MCF 10A (cell line): ENCODE measurements at regions of chr7 and their contacts with region 1.

Region 1: DNA sequence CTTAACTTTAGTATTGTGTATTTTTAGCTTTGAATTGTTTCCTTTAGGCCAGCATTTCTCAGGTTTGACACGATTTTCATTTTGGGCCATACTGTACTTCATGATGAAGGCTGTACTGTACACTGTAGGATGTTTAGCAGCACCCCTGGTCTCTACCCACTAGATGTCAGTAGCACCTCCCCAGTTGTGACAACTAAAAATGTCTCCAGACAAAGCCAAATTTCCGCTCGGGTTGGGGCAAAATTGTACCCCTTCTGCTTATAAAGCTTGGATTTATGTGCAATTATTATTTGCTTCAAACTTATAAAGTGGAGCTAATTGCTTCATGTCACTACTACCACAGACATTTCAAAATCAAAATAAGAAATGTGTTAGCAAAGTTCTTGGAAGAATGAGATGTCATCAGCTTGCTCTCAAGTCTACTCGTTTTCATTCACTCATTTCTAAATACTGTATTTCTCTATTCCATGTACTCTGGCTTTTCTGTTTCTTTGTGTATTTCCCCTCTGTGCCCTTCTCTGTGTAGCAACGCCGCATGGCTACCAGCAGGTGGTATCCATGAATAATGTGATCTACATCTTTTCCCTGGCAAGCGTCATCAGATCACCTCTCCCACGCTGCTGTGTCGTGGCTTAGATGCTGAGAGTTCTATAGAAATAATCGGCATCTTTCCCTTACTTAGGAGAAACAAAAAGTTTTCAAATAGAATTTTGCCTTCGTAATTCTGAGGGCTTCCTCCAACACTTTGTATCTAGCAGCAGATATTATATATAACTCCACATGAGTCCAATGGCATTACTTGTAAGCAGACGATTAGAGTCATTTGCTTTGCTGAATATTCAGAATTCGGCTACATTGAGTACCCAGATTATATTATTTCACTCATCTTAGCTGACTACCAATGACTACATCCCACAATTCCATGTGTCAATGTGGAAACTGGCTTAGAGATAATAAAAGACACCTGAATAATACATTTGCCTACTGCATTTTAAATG is 47.8 kb upstream of the CALCR start:
- DNase-seq: peak; percentile 41
- H3K4me3 Mint-ChIP-seq: no peak overlapping the region
- H3K27ac Mint-ChIP-seq: no peak overlapping the region
- H3K4me1 Mint-ChIP-seq: peaks cover 6% of the 10 kb centered on the region
- H3K27me3 Mint-ChIP-seq: peaks cover 91% of the 10 kb centered on the region
- CTCF ChIP-seq: peak; percentile 41

Region 2: DNA sequence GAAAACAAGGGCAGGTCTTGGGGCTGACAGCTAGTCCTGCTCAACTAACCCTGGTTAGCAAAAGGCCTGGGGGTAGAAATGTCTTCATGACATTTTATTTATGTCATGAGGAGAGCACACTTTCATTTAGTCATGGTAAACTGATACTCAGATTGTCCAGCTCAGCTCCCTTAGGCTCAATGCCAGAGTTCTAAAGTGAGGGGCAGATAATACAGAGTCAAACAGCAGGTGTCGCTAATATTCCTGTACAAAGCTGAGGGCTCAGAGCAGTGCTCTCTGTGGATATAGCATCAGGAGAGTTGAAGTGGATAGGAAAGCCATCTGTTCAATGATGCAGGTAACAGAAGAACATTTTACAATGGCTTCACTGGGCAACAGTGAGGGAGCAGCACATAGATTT is 21.0 kb before region 1 on chr7:
- CTCF ChIA-PET with region 1: interaction called, 13 read pairs
- POLR2A ChIA-PET with region 1: no interaction called
- intact Hi-C with region 1: no loop called
- DNase-seq: peak; percentile 20
- H3K4me3 Mint-ChIP-seq: no peak overlapping the region
- H3K27ac Mint-ChIP-seq: no peak overlapping the region
- H3K4me1 Mint-ChIP-seq: no peaks in the 10 kb centered on the region
- H3K27me3 Mint-ChIP-seq: peaks cover 87% of the 10 kb centered on the region
- CTCF ChIP-seq: no peak

Region 3: DNA sequence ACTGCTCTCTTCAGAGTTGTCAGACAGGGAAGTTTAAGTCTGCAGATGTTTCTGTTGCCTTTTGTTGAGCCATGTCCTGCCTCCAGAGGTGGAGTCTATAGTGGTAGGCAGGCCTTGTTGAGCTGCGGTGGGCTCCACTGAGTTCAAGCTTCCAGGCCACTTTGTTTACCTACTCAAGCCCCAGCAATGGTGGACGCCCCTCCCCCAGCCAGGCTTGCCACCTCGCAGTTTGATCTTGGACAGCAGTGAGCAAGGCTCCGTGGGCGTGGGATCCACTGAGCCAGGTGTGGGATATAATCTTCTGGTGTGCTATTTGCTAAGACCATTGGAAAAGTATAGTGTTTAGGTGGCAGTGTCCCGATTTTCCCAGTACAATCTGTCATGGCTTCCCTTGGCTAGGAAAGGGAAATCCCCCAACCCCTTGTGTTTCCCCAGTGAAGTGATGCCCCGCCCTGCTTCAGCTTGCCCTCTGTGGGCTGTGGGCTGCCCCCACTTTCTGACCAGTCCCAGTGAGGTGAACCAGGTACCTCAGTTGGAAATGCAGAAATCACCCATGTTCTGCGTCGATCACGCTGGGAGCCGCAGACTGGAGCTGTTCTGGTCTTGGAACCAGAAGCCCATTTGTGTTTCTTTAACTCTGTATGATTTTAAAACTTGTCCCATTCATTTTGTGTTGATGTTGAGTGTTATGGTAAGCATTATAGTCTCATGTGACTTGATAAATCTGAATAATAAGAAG is 41.4 kb after region 1 on chr7:
- CTCF ChIA-PET with region 1: no interaction called
- POLR2A ChIA-PET with region 1: no interaction called
- intact Hi-C with region 1: no loop called
- DNase-seq: no peak
- H3K4me3 Mint-ChIP-seq: no peak overlapping the region
- H3K27ac Mint-ChIP-seq: no peak overlapping the region
- H3K4me1 Mint-ChIP-seq: no peaks in the 10 kb centered on the region
- H3K27me3 Mint-ChIP-seq: peaks cover 69% of the 10 kb centered on the region
- CTCF ChIP-seq: no peak

Region 4: DNA sequence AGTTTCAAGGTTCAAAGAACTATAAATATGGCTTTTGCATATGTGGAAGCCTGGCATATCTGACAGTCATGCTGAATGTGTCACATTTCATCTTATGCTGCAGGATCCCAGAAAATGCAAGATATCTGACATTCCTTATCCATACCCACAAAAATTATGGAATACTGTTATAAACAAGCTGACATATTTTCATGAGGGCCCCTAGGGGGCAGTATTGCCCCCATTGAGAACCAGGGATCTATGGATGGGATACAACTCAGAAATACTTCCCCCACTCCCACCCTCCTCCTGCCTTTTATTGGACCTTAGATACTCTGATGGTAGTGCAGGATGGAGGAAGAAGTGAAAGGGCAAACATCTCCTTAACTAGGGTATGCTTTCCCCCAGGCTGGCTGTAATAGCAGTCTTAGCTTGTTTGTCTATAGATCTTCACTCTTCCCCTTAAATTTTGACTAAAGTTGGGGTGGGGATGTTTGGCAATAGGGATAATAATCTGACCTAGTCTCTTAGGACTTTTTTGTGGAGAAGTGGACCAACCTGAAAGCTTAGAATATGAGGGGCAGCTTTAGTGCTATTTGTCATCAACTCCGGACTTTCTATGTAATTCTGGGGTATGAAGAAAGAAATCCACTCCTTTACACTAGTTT is 280.6 kb after region 1 on chr7:
- CTCF ChIA-PET with region 1: interaction called, 3 read pairs
- POLR2A ChIA-PET with region 1: no interaction called
- intact Hi-C with region 1: loop called (anchors 10 kb)
- DNase-seq: peak; percentile 68
- H3K4me3 Mint-ChIP-seq: no peak overlapping the region
- H3K27ac Mint-ChIP-seq: no peak overlapping the region
- H3K4me1 Mint-ChIP-seq: no peaks in the 10 kb centered on the region
- H3K27me3 Mint-ChIP-seq: no peaks in the 10 kb centered on the region
- CTCF ChIP-seq: peak; percentile 80